ENCODE measurements at regions of chr6 and their contacts with region 1.

Region 1: DNA sequence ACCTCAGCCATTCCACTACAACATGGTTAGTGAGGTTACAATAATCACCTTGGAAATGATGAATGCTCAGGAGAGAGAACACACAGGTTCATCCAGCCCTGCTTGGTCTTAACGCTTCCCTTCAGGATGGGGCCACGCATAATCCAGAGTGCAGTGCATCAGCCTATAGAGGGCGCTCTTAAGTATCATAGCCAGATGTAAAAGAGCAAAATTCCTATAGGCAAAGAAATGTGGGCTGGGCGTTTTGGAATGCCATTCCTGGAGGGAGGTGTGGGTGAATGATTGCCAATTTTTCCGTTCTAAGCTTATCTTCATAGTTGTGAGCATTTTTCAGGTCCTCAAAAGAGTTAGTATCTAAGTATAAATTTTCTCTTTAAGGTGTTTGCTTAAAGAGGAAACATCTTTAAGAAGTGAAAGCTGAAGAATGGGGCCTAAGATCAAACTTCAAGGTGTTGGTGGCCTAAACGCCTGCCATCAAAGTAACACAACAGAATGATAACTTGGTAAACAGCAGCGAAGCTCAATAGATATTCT is 1.8 kb downstream of the RIPOR2 start:
- DNase-seq: no peak
- H3K4me3 ChIP-seq: no peak overlapping the region
- H3K27ac ChIP-seq: no peak overlapping the region
- H3K4me1 ChIP-seq: no peaks in the 10 kb centered on the region
- H3K27me3 ChIP-seq: no peaks in the 10 kb centered on the region
- CTCF ChIP-seq: no peak
- POLR2A ChIP-seq: no peak

Region 2: DNA sequence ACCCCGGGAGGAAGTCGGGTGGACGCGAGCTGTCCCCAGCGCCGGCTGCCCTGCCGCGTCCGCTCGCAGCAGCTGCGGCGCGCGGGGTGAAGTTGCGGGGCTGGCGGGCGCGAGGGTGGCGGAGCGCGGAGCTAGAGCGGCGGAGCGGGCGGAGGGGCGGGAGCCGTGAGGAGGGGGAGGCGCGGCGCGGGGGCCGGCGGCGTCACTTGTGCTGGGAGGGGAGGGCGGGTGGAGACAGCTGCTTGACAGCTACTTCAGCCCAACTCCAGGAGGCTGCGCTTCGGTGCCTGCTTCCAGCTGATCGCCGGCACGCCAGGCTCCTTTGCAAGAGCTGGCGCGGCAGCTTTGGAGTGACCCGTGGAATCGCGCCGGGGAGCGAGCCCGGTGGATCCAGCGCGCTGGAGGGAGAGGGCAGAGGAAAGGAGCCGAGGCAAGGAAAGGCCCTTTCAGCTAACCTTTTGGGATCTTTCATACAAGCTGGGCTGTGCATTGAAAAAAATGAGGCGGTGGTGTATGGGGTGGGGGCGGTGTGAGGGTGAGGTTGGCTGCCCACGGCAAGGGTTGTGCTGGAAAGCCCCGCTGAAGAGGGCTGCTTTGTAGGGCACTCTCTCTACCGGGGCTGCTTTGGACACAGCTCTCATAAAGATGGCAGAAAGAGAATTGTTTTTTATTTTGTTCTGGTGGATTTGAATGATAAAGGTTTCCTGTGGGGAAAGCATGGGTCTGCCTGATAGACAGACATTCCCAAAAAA is 22.8 kb before region 1 on chr6:
- intact Hi-C with region 1: loop called (anchors 1 kb)
- DNase-seq: peak in 1 of 2 donors; percentile 37
- H3K4me3 ChIP-seq: peak overlapping the region; percentile 56 to 88 (median 71)
- H3K27ac ChIP-seq: peak overlapping the region; percentile 62 to 83
- H3K4me1 ChIP-seq: peaks cover 2 to 6% of the 10 kb centered on the region in 2 donors
- H3K27me3 ChIP-seq: no peaks in the 10 kb centered on the region
- CTCF ChIP-seq: no peak
- POLR2A ChIP-seq: no peak